Naive thymus-derived CD4-positive, alpha-beta T cell (primary cell): ENCODE measurements at regions of chr18 and their contacts with region 1.

Region 1: GRCh38 chr18:62714671-62715435 is 488 bp upstream of the PHLPP1 start:
- DNase-seq: peak; percentile 82 to 91 (median 88)
- ATAC-seq: peak; percentile 86
- H3K4me3 ChIP-seq: peak overlapping the region; percentile 84
- H3K4me3 Mint-ChIP-seq: peak overlapping the region; percentile 80 to 96 (median 90)
- H3K27ac ChIP-seq: peak overlapping the region; percentile 78
- H3K27ac Mint-ChIP-seq: peak overlapping the region; percentile 84 to 99 (median 95)
- H3K4me1 ChIP-seq: peaks cover 0 to 12% of the 10 kb centered on the region in 2 donors
- H3K4me1 Mint-ChIP-seq: peaks cover 11 to 34% (median 30%) of the 10 kb centered on the region in 7 donors
- H3K27me3 ChIP-seq: no peaks in the 10 kb centered on the region
- H3K27me3 Mint-ChIP-seq: peaks cover 0 to 22% (median 0%) of the 10 kb centered on the region in 5 donors

Region 2: GRCh38 chr18:61893971-61894750 is 820.7 kb before region 1 on chr18:
- CTCF ChIA-PET with region 1: no interaction called
- POLR2A ChIA-PET with region 1: no interaction called
- intact Hi-C with region 1: loop called in 1 of 2 experiments (anchors 5 kb)
- DNase-seq: peak; percentile 30 to 73 (median 57)
- ATAC-seq: peak; percentile 93
- H3K4me3 ChIP-seq: peak overlapping the region; percentile 57
- H3K4me3 Mint-ChIP-seq: peak overlapping the region; percentile 71 to 97 (median 84)
- H3K27ac ChIP-seq: no peak overlapping the region
- H3K27ac Mint-ChIP-seq: no peak overlapping the region
- H3K4me1 ChIP-seq: peaks cover 4 to 5% of the 10 kb centered on the region in 2 donors
- H3K4me1 Mint-ChIP-seq: peaks cover 9 to 16% (median 13%) of the 10 kb centered on the region in 7 donors
- H3K27me3 ChIP-seq: peaks cover 0 to 5% of the 10 kb centered on the region in 2 donors
- H3K27me3 Mint-ChIP-seq: peaks cover 23 to 78% (median 44%) of the 10 kb centered on the region in 5 donors

Region 3: DNA sequence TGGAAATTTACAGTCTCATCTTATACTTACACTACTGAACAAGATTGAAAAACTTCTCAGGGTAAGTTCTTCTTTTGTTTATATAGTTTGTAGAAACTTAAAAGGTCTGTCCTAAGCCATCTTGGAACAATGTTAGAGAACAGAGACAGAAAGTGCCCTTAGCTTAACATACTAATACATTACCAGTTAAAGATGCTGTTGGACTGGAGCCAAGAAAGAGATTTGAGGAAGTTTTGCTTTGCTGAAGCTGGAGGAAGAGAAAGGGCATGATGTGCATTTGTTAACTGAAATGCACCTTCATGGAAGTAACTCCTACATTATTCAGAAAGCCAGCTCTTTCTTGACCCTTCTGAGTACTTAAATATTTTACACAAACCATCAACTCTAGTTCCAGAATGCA is 456.2 kb before region 1 on chr18:
- CTCF ChIA-PET with region 1: no interaction called
- POLR2A ChIA-PET with region 1: no interaction called
- intact Hi-C with region 1: no loop called
- DNase-seq: no peak
- ATAC-seq: no peak
- H3K4me3 ChIP-seq: no peak overlapping the region
- H3K4me3 Mint-ChIP-seq: no peak overlapping the region
- H3K27ac ChIP-seq: no peak overlapping the region
- H3K27ac Mint-ChIP-seq: no peak overlapping the region
- H3K4me1 ChIP-seq: no peaks in the 10 kb centered on the region
- H3K4me1 Mint-ChIP-seq: peaks cover 0 to 4% (median 0%) of the 10 kb centered on the region in 7 donors
- H3K27me3 ChIP-seq: no peaks in the 10 kb centered on the region
- H3K27me3 Mint-ChIP-seq: no peaks in the 10 kb centered on the region

Region 4: GRCh38 chr18:62505669-62506494 is 209.0 kb before region 1 on chr18:
- CTCF ChIA-PET with region 1: no interaction called
- POLR2A ChIA-PET with region 1: no interaction called
- intact Hi-C with region 1: loop called in 1 of 2 experiments (anchors 5 kb)
- DNase-seq: peak in 5 of 9 donors; percentile 37 to 49 (median 47)
- ATAC-seq: peak; percentile 58
- H3K4me3 ChIP-seq: peak overlapping the region; percentile 77
- H3K4me3 Mint-ChIP-seq: peak overlapping the region; percentile 82 to 94 (median 88)
- H3K27ac ChIP-seq: peak overlapping the region; percentile 67
- H3K27ac Mint-ChIP-seq: peak overlapping the region; percentile 90 to 100 (median 96)
- H3K4me1 ChIP-seq: peaks cover 5 to 17% of the 10 kb centered on the region in 2 donors
- H3K4me1 Mint-ChIP-seq: peaks cover 4 to 30% (median 21%) of the 10 kb centered on the region in 7 donors
- H3K27me3 ChIP-seq: no peaks in the 10 kb centered on the region
- H3K27me3 Mint-ChIP-seq: no peaks in the 10 kb centered on the region

Region 5: GRCh38 chr18:62729487-62730386 is 14.9 kb after region 1 on chr18:
- CTCF ChIA-PET with region 1: no interaction called
- POLR2A ChIA-PET with region 1: interaction called, 3 read pairs
- intact Hi-C with region 1: loop called in 1 of 2 experiments (anchors 2 kb)
- DNase-seq: no peak
- ATAC-seq: no peak
- H3K4me3 ChIP-seq: no peak overlapping the region
- H3K4me3 Mint-ChIP-seq: no peak overlapping the region
- H3K27ac ChIP-seq: no peak overlapping the region
- H3K27ac Mint-ChIP-seq: no peak overlapping the region
- H3K4me1 ChIP-seq: no peaks in the 10 kb centered on the region
- H3K4me1 Mint-ChIP-seq: peaks cover 0 to 4% (median 0%) of the 10 kb centered on the region in 7 donors
- H3K27me3 ChIP-seq: no peaks in the 10 kb centered on the region
- H3K27me3 Mint-ChIP-seq: peaks cover 0 to 4% (median 0%) of the 10 kb centered on the region in 5 donors

Region 6: DNA sequence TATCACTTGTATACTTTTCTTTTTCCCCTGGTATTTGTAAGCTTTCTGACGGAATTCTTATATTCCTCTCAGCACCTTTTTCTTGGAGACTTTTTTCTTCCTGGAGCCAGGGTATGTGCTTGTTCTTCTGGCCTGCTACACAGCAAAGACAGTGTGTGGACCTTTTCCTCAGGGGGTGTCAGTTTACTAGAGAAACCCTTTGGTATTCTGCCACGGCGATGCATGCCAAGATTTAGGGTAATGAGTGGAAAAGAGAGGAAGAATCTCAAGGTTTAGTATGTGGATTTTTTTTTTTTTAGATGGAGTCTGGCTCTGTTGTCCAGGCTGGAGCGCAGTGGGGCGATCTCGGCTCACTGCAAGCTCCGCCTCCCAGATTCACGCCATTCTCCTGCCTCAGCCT is 152.7 kb after region 1 on chr18:
- CTCF ChIA-PET with region 1: no interaction called
- POLR2A ChIA-PET with region 1: no interaction called
- intact Hi-C with region 1: loop called (anchors 1 kb)
- DNase-seq: no peak
- ATAC-seq: no peak
- H3K4me3 ChIP-seq: no peak overlapping the region
- H3K4me3 Mint-ChIP-seq: peak overlapping the region in 1 of 10 donors; percentile 5
- H3K27ac ChIP-seq: no peak overlapping the region
- H3K27ac Mint-ChIP-seq: peak overlapping the region in 1 of 9 donors; percentile 14
- H3K4me1 ChIP-seq: peaks cover 3 to 9% of the 10 kb centered on the region in 2 donors
- H3K4me1 Mint-ChIP-seq: peaks cover 12 to 33% (median 21%) of the 10 kb centered on the region in 7 donors
- H3K27me3 ChIP-seq: no peaks in the 10 kb centered on the region
- H3K27me3 Mint-ChIP-seq: no peaks in the 10 kb centered on the region

Region 7: DNA sequence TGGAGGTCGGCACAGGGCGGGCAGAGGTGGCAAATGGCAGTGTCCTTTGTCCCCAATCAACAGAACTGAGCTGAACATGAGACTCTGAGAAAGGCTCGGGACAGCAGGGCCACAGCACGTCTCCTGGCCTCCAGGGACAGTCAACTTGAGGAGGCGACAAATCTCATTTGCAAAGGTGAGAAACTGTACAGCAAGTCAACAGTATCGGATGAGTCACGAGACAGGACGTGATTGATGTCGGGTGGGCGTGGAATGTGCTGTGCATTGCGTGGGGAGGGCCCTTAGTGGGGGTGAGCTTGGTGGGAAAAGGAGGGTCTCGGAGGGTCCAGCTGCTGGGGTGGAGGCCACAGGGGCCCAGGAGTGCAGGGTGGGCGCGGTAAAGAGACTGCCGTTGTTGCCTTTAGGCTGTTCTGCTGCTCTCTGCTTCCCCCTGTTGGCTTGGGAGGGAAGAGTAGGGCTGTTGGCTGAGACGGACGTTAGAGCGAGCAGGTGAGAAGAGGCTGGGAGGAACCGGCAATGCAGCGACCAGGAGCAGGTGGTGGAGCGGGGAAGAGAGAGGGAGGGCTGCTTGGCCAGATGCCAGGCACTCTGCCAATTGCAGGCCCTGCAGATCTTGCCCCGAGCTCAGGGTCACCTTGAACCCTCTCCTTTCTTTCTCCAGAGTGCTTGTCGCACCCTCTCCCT is 440.5 kb after region 1 on chr18:
- CTCF ChIA-PET with region 1: no interaction called
- POLR2A ChIA-PET with region 1: no interaction called
- intact Hi-C with region 1: loop called in 1 of 2 experiments (anchors 1 kb)
- DNase-seq: peak; percentile 64 to 89 (median 80)
- ATAC-seq: peak; percentile 85
- H3K4me3 ChIP-seq: peak overlapping the region; percentile 56
- H3K4me3 Mint-ChIP-seq: peak overlapping the region; percentile 78 to 99 (median 88)
- H3K27ac ChIP-seq: peak overlapping the region; percentile 90
- H3K27ac Mint-ChIP-seq: peak overlapping the region; percentile 77 to 99 (median 95)
- H3K4me1 ChIP-seq: peaks cover 89 to 92% of the 10 kb centered on the region in 2 donors
- H3K4me1 Mint-ChIP-seq: peaks cover 80 to 100% (median 100%) of the 10 kb centered on the region in 7 donors
- H3K27me3 ChIP-seq: no peaks in the 10 kb centered on the region
- H3K27me3 Mint-ChIP-seq: no peaks in the 10 kb centered on the region

Region 8: DNA sequence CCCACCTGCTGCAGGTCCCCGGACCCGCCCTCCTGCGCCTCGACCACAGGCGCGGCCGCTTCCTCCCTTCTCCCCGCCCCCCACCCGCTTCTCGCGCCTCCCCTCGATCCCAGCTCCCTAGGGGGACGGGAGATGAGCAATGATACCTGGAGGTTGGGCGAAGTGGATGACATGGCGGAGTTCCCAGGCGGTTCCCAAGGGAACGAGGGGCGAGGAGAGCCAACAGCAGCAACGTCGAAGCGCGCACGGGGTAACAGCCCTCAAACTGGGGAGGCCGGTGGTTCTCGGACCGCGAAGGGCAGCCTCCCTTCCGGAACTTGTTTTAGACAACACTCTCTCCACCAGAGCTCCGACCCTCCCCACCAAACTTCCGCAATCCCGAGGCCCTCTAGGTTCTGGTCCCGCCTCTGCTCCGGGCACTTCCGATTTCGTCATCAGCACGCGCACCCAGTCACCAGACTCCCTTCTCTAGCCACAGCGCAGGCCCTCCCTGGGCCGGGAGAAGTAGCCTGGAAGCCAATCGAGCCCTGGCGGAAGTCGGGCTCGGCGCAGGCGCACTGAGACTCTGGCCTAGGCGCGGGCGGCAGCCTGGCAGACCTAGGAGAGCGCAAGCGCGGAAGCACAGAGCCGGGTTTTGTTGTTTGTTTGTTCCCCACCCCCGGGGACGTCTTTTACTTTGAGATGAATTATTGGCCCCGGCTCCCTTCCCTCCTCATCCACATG is 707.4 kb after region 1 on chr18 and contains the start of gene VPS4B:
- CTCF ChIA-PET with region 1: no interaction called
- POLR2A ChIA-PET with region 1: interaction called, 8 read pairs
- intact Hi-C with region 1: loop called (anchors 1 kb)
- DNase-seq: peak; percentile 99 to 100 (median 99)
- ATAC-seq: peak; percentile 97
- H3K4me3 ChIP-seq: peak within 1 kb of the TSS; percentile 96
- H3K4me3 Mint-ChIP-seq: peak within 1 kb of the TSS; percentile 88 to 100 (median 97)
- H3K27ac ChIP-seq: peak within 1 kb of the TSS; percentile 95
- H3K27ac Mint-ChIP-seq: peak within 1 kb of the TSS; percentile 94 to 100 (median 98)
- H3K4me1 ChIP-seq: peaks cover 17 to 22% of the 10 kb centered on the region in 2 donors
- H3K4me1 Mint-ChIP-seq: peaks cover 6 to 34% (median 26%) of the 10 kb centered on the region in 7 donors
- H3K27me3 ChIP-seq: no peaks in the 10 kb centered on the region
- H3K27me3 Mint-ChIP-seq: peaks cover 0 to 5% (median 2%) of the 10 kb centered on the region in 5 donors
- total RNA-seq, gene VPS4B: 48.2 to 84.6 (median 74.9) TPM